ENCODE measurements at regions of chr3 and their contacts with region 1.

Region 1: GRCh38 chr3:62558549-62559112 is 185.3 kb upstream of the FEZF2 start:
- H3K4me3 Mint-ChIP-seq: no peak overlapping the region
- H3K27ac Mint-ChIP-seq: no peak overlapping the region
- H3K4me1 Mint-ChIP-seq: no peaks in the 10 kb centered on the region
- H3K27me3 Mint-ChIP-seq: no peaks in the 10 kb centered on the region

Region 2: GRCh38 chr3:62201438-62202035 is 357.1 kb before region 1 on chr3:
- intact Hi-C with region 1: loop called (anchors 10 kb)
- H3K4me3 Mint-ChIP-seq: no peak overlapping the region
- H3K27ac Mint-ChIP-seq: no peak overlapping the region
- H3K4me1 Mint-ChIP-seq: no peaks in the 10 kb centered on the region
- H3K27me3 Mint-ChIP-seq: no peaks in the 10 kb centered on the region

Measured in dendritic cell treated with granulocyte-macrophage colony-stimulating factor and Interleukin-4, amounts not matched to agents 40 ng/mL and 50 ng/mL, for 4 days (primary cell).